Left colon (tissue), 2 donors: ENCODE measurements at regions of chr13 and their contacts with region 1.

Region 1: DNA sequence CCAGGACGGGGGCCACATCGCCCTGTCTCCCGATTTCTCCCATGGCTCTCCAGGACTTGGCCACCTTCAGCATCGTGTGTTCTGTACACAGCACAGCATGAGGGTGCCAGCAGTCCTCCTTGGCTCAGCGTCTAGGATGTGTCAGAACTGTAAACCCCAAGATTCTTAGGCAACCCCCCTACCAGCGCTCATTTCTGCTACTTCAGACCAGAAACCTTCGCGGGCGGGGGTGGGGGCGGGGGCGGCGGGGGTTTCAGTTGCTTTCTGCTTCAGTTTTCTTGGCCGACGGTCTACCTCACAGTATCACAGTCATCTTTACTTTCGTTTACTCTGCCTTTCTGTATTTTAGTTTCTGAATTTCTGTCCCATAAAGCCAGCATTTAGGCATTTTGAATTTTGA is 82.4 kb downstream of the GGACT start:
- DNase-seq: no peak
- ATAC-seq: no peak

Region 2: DNA sequence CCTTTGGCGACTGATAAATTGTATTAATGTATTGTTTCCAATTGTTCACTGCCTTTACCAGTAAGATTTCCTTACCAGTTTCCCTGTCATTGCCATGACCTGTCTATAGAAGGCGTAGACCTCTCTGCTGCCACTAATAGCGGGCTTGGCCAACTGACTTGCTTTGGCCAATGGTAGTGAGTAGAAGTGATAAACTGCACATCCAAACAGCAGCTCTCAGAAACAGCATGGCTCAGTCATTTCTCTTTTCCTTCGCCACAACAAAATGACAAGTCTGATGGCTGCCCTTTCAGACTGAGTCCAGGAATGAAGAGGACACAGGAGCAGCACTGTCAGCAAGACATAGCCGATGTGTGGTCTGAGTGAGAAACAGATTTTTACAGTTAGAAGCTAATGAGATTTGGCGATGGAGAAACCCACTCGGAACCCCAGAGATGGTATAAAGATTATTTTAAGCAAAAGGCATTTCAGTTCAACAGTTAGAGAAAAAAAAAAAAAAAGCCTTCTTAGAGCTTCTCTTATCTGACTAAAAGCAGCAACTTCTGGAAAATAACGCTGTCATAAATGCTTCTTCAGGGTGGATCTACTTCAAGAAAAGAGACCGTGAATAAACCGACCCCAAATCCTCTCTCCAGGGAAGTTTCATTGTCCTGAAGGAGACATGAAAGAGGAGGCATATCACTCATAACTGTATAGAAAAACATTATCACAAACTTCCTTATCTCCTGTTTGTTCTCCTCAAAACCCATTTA is 1046.9 kb before region 1 on chr13:
- intact Hi-C with region 1: loop called in 1 of 2 experiments (anchors 10 kb)
- DNase-seq: no peak
- ATAC-seq: no peak